Caco-2 (cell line): ENCODE measurements at regions of chr5 and their contacts with region 1.

Region 1: DNA sequence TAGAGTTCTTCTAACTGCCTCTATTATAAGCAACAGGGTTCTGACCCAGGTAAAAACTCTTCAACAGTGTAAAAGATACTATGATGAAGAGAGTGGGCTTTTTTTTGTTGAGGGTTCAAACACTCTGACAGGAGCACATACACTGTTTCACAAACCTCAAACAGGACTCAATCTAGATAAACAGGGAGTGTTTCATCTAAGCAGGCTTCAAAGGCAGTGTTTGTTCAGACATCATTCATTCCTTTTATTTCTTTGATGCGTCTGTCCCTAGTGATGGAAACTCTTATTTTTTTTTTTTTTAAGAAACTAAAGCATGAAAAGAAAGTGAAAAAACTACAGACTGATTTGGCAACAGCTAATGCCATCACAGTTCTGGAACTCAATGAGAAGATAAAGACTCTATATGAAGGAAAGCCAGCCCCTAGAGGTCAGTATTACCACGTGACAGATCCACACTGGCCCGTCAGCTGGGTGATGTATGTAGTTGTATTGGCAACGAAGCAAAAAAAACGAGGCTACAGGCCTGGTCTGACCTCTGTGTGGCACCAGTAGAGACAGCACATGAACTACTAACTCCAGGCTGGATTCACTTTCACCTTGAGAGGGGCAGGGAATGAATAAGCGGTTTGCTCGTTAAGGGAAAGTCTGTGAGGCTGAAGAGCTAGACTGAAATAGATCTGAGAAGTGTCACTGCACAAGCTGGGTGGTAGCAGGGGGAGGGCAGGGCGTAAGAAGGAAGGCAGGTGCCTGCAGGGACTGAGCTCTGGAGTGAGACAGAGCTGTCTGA is 172.2 kb downstream of the CCDC192 start:
- DNase-seq: peak; percentile 87
- H3K4me3 ChIP-seq: no peak overlapping the region
- H3K4me3 Mint-ChIP-seq: no peak overlapping the region
- H3K27ac Mint-ChIP-seq: peak overlapping the region; percentile 43
- H3K4me1 ChIP-seq: peaks cover 40% of the 10 kb centered on the region
- H3K4me1 Mint-ChIP-seq: peaks cover 21% of the 10 kb centered on the region
- H3K27me3 ChIP-seq: peaks cover 1% of the 10 kb centered on the region; the same call in 1 of the 2 replicates
- H3K27me3 Mint-ChIP-seq: no peaks in the 10 kb centered on the region
- CTCF ChIP-seq: peak; percentile 48 to 50

Region 2: GRCh38 chr5:127746756-127747155 is 128.7 kb before region 1 on chr5:
- CTCF ChIA-PET with region 1: interaction called, 3 read pairs
- POLR2A ChIA-PET with region 1: no interaction called
- intact Hi-C with region 1: loop called (anchors 2 kb)
- DNase-seq: peak in 1 of 2 experiments; percentile 24
- H3K4me3 ChIP-seq: no peak overlapping the region
- H3K4me3 Mint-ChIP-seq: no peak overlapping the region
- H3K27ac Mint-ChIP-seq: no peak overlapping the region
- H3K4me1 ChIP-seq: no peaks in the 10 kb centered on the region
- H3K4me1 Mint-ChIP-seq: no peaks in the 10 kb centered on the region
- H3K27me3 ChIP-seq: no peaks in the 10 kb centered on the region
- H3K27me3 Mint-ChIP-seq: no peaks in the 10 kb centered on the region
- CTCF ChIP-seq: peak; percentile 52 to 72

Region 3: GRCh38 chr5:127796211-127796610 is 79.2 kb before region 1 on chr5:
- CTCF ChIA-PET with region 1: no interaction called
- POLR2A ChIA-PET with region 1: no interaction called
- intact Hi-C with region 1: no loop called
- DNase-seq: no peak
- H3K4me3 ChIP-seq: no peak overlapping the region
- H3K4me3 Mint-ChIP-seq: no peak overlapping the region
- H3K27ac Mint-ChIP-seq: no peak overlapping the region
- H3K4me1 ChIP-seq: no peaks in the 10 kb centered on the region
- H3K4me1 Mint-ChIP-seq: no peaks in the 10 kb centered on the region
- H3K27me3 ChIP-seq: no peaks in the 10 kb centered on the region
- H3K27me3 Mint-ChIP-seq: no peaks in the 10 kb centered on the region
- CTCF ChIP-seq: no peak

Region 4: GRCh38 chr5:127934791-127935256 is 59.4 kb after region 1 on chr5:
- CTCF ChIA-PET with region 1: interaction called, 3 read pairs
- POLR2A ChIA-PET with region 1: no interaction called
- intact Hi-C with region 1: loop called (anchors 1 kb)
- DNase-seq: peak; percentile 78 to 84
- H3K4me3 ChIP-seq: no peak overlapping the region
- H3K4me3 Mint-ChIP-seq: no peak overlapping the region
- H3K27ac Mint-ChIP-seq: peak overlapping the region; percentile 32
- H3K4me1 ChIP-seq: peaks cover 42% of the 10 kb centered on the region
- H3K4me1 Mint-ChIP-seq: peaks cover 60% of the 10 kb centered on the region
- H3K27me3 ChIP-seq: no peaks in the 10 kb centered on the region
- H3K27me3 Mint-ChIP-seq: no peaks in the 10 kb centered on the region
- CTCF ChIP-seq: peak in 1 of 2 experiments; percentile 43

Region 5: DNA sequence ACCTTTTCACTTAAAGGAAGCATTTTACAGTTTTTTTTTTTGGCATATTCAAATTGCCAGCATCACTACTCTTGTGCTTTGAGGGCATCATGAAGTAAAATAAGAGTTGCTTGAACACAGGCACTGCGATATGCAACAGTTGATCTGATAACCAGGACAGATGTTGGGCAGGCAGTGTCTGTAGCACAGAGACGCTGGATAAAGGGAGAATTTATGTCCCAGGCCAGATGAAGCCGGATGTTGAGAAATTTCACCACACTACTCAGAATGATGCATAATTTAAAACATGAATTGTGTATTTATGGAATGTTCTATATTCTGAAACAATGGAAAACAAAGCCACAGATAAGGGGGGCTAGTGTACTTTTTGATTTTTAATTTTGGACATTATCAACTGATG is 279.5 kb after region 1 on chr5:
- CTCF ChIA-PET with region 1: interaction called, 8 read pairs
- POLR2A ChIA-PET with region 1: no interaction called
- intact Hi-C with region 1: loop called (anchors 1 kb)
- DNase-seq: no peak
- H3K4me3 ChIP-seq: no peak overlapping the region
- H3K4me3 Mint-ChIP-seq: no peak overlapping the region
- H3K27ac Mint-ChIP-seq: no peak overlapping the region
- H3K4me1 ChIP-seq: peaks cover 27% of the 10 kb centered on the region
- H3K4me1 Mint-ChIP-seq: peaks cover 2% of the 10 kb centered on the region
- H3K27me3 ChIP-seq: no peaks in the 10 kb centered on the region
- H3K27me3 Mint-ChIP-seq: no peaks in the 10 kb centered on the region
- CTCF ChIP-seq: no peak

Region 6: GRCh38 chr5:128213340-128213739 is 337.9 kb after region 1 on chr5:
- CTCF ChIA-PET with region 1: no interaction called
- POLR2A ChIA-PET with region 1: no interaction called
- intact Hi-C with region 1: loop called (anchors 1 kb)
- DNase-seq: peak; percentile 60 to 69
- H3K4me3 ChIP-seq: no peak overlapping the region
- H3K4me3 Mint-ChIP-seq: no peak overlapping the region
- H3K27ac Mint-ChIP-seq: no peak overlapping the region
- H3K4me1 ChIP-seq: no peaks in the 10 kb centered on the region
- H3K4me1 Mint-ChIP-seq: no peaks in the 10 kb centered on the region
- H3K27me3 ChIP-seq: no peaks in the 10 kb centered on the region
- H3K27me3 Mint-ChIP-seq: no peaks in the 10 kb centered on the region
- CTCF ChIP-seq: peak; percentile 74 to 87

Region 7: GRCh38 chr5:128844354-128844923 is 969.0 kb after region 1 on chr5:
- CTCF ChIA-PET with region 1: no interaction called
- POLR2A ChIA-PET with region 1: no interaction called
- intact Hi-C with region 1: loop called (anchors 1 kb)
- DNase-seq: no peak
- H3K4me3 ChIP-seq: no peak overlapping the region
- H3K4me3 Mint-ChIP-seq: no peak overlapping the region
- H3K27ac Mint-ChIP-seq: no peak overlapping the region
- H3K4me1 ChIP-seq: no peaks in the 10 kb centered on the region
- H3K4me1 Mint-ChIP-seq: no peaks in the 10 kb centered on the region
- H3K27me3 ChIP-seq: no peaks in the 10 kb centered on the region
- H3K27me3 Mint-ChIP-seq: no peaks in the 10 kb centered on the region
- CTCF ChIP-seq: peak in 1 of 2 experiments; percentile 29